MCF 10A (cell line): ENCODE measurements at regions of chr9 and their contacts with region 1.

Region 1: DNA sequence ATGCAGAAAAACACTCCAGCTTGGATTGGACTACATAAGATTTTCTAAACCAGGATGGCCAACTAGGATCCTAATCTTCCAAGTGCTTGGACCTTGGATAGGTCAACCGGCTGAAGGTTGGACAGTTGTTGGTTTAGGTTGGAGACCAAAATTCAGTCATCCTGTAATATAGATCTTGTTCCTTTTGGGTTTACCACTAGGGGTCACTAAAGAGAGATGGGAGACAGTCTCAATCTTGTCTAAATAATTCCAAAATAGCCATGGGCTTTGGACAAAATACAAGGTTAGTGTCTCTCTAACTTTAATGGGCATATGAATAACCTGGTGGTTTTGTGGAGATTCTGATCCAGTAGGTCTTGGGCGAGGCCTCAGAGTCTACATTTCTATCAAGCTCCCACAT is 148.7 kb upstream of the ERCC6L2 start:
- DNase-seq: peak; percentile 67
- H3K4me3 Mint-ChIP-seq: no peak overlapping the region
- H3K27ac Mint-ChIP-seq: no peak overlapping the region
- H3K4me1 Mint-ChIP-seq: no peaks in the 10 kb centered on the region
- H3K27me3 Mint-ChIP-seq: no peaks in the 10 kb centered on the region
- CTCF ChIP-seq: peak; percentile 62

Region 2: GRCh38 chr9:95715868-95716435 is 10.8 kb before region 1 on chr9:
- CTCF ChIA-PET with region 1: interaction called, 12 read pairs
- POLR2A ChIA-PET with region 1: interaction called, 3 read pairs
- intact Hi-C with region 1: no loop called
- DNase-seq: no peak
- H3K4me3 Mint-ChIP-seq: no peak overlapping the region
- H3K27ac Mint-ChIP-seq: no peak overlapping the region
- H3K4me1 Mint-ChIP-seq: no peaks in the 10 kb centered on the region
- H3K27me3 Mint-ChIP-seq: no peaks in the 10 kb centered on the region
- CTCF ChIP-seq: no peak

Region 3: GRCh38 chr9:95793924-95794828 is 67.4 kb after region 1 on chr9:
- CTCF ChIA-PET with region 1: no interaction called
- POLR2A ChIA-PET with region 1: no interaction called
- intact Hi-C with region 1: no loop called
- DNase-seq: peak; percentile 93
- H3K4me3 Mint-ChIP-seq: no peak overlapping the region
- H3K27ac Mint-ChIP-seq: no peak overlapping the region
- H3K4me1 Mint-ChIP-seq: peaks cover 25% of the 10 kb centered on the region
- H3K27me3 Mint-ChIP-seq: peaks cover 10% of the 10 kb centered on the region
- CTCF ChIP-seq: no peak

Region 4: DNA sequence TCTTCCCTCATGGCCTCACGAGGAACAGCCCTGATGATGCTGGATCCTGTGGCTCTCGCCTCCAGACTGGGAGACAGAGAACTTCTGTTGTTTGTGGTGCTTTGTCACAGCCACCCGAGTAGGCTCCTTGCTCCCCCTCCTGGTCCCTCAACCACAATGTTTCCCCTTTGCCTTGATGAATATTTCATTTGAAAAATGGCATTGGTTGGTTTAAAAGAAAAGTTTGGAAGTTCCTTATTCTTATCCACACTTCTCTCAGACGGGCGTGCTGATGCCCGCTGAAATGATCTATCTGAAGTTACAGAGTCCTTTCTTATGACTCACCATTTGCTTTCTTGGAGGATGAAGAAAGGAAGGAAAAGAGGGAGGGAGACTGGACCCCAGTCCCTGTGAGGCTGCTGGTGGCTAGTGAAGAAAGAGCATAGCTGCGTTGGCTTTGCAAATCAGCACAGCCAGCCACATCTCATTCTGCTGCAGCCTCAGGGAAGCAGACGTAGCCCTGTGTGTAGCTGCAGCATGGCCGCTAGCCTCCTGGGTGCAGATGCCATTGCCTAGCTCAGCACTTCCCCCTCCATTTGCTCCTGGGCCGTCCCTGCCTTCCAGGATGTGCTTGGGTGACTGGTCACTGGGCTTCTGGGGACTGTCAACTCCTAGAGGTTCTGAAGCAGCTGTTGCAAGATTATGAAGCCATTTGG is 334.7 kb after region 1 on chr9:
- CTCF ChIA-PET with region 1: interaction called, 4 read pairs
- POLR2A ChIA-PET with region 1: no interaction called
- intact Hi-C with region 1: loop called (anchors 1 kb)
- DNase-seq: peak; percentile 40
- H3K4me3 Mint-ChIP-seq: no peak overlapping the region
- H3K27ac Mint-ChIP-seq: no peak overlapping the region
- H3K4me1 Mint-ChIP-seq: no peaks in the 10 kb centered on the region
- H3K27me3 Mint-ChIP-seq: peaks cover 12% of the 10 kb centered on the region
- CTCF ChIP-seq: peak; percentile 10